Cardiac septum (tissue), 1 donor: ENCODE measurements at regions of chr17 and their contacts with region 1.

Region 1: GRCh38 chr17:42944211-42944610 is 20.0 kb downstream of the AARSD1 start:
- DNase-seq: no peak

Region 2: GRCh38 chr17:42698736-42699414 is 245.3 kb before region 1 on chr17:
- intact Hi-C with region 1: no loop called
- DNase-seq: peak; percentile 66

Region 3: GRCh38 chr17:42989726-42990652 is 45.8 kb after region 1 on chr17:
- intact Hi-C with region 1: loop called (anchors 5 kb)
- DNase-seq: no peak